ENCODE measurements at regions of chr10 and their contacts with region 1.

Region 1: GRCh38 chr10:21740989-21741388 is 207.0 kb downstream of the MLLT10 start:
- DNase-seq: no peak
- ATAC-seq: no peak
- H3K4me3 ChIP-seq: no peak overlapping the region
- H3K27ac ChIP-seq: no peak overlapping the region
- H3K4me1 ChIP-seq: no peaks in the 10 kb centered on the region
- H3K27me3 ChIP-seq: no peaks in the 10 kb centered on the region
- CTCF ChIP-seq: no peak

Region 2: GRCh38 chr10:21278491-21279239 is 462.3 kb before region 1 on chr10:
- intact Hi-C with region 1: loop called in 3 of 10 experiments (anchors 5 to 10 kb)
- DNase-seq: peak; percentile 93 to 96
- ATAC-seq: peak; percentile 92 to 99 (median 98)
- H3K4me3 ChIP-seq: no peak overlapping the region
- H3K27ac ChIP-seq: peak overlapping the region in 2 of 10 donors; percentile 17 to 30
- H3K4me1 ChIP-seq: peaks cover 0 to 9% (median 5%) of the 10 kb centered on the region in 9 donors
- H3K27me3 ChIP-seq: no peaks in the 10 kb centered on the region
- CTCF ChIP-seq: peak; percentile 66 to 89 (median 86)

Region 3: GRCh38 chr10:21935439-21936023 is 194.5 kb after region 1 on chr10:
- intact Hi-C with region 1: loop called in 1 of 10 experiments (anchors 5 kb)
- DNase-seq: no peak
- ATAC-seq: no peak
- H3K4me3 ChIP-seq: no peak overlapping the region
- H3K27ac ChIP-seq: no peak overlapping the region
- H3K4me1 ChIP-seq: peaks cover 0 to 12% (median 3%) of the 10 kb centered on the region in 9 donors
- H3K27me3 ChIP-seq: no peaks in the 10 kb centered on the region
- CTCF ChIP-seq: no peak

Region 4: GRCh38 chr10:22986771-22987542 is 1246.0 kb after region 1 on chr10:
- intact Hi-C with region 1: no loop called
- DNase-seq: no peak
- ATAC-seq: peak in 4 of 8 donors; percentile 42 to 62 (median 50)
- H3K4me3 ChIP-seq: no peak overlapping the region
- H3K27ac ChIP-seq: no peak overlapping the region
- H3K4me1 ChIP-seq: peaks cover 0 to 13% (median 2%) of the 10 kb centered on the region in 9 donors
- H3K27me3 ChIP-seq: no peaks in the 10 kb centered on the region
- CTCF ChIP-seq: peak in 7 of 9 donors; percentile 34 to 62 (median 55)

Measured in heart right ventricle (tissue), 16 donors.